Esophagus squamous epithelium (tissue), 5 donors: ENCODE measurements at regions of chr3 and their contacts with region 1.

Region 1: GRCh38 chr3:38651154-38651789 is 1.8 kb upstream of the SCN5A start:
- DNase-seq: no peak
- H3K4me3 ChIP-seq: peak overlapping the region in 1 of 4 donors; percentile 29
- H3K27ac ChIP-seq: no peak overlapping the region
- H3K4me1 ChIP-seq: peaks cover 10 to 25% (median 11%) of the 10 kb centered on the region in 3 donors
- H3K27me3 ChIP-seq: peaks cover 0 to 96% (median 6%) of the 10 kb centered on the region in 4 donors
- CTCF ChIP-seq: peak; percentile 75 to 96 (median 87)
- POLR2A ChIP-seq: no peak

Region 2: GRCh38 chr3:38397320-38397719 is 254.0 kb before region 1 on chr3:
- intact Hi-C with region 1: no loop called
- DNase-seq: no peak
- H3K4me3 ChIP-seq: no peak overlapping the region
- H3K27ac ChIP-seq: no peak overlapping the region
- H3K4me1 ChIP-seq: no peaks in the 10 kb centered on the region
- H3K27me3 ChIP-seq: no peaks in the 10 kb centered on the region
- CTCF ChIP-seq: no peak
- POLR2A ChIP-seq: no peak

Region 3: DNA sequence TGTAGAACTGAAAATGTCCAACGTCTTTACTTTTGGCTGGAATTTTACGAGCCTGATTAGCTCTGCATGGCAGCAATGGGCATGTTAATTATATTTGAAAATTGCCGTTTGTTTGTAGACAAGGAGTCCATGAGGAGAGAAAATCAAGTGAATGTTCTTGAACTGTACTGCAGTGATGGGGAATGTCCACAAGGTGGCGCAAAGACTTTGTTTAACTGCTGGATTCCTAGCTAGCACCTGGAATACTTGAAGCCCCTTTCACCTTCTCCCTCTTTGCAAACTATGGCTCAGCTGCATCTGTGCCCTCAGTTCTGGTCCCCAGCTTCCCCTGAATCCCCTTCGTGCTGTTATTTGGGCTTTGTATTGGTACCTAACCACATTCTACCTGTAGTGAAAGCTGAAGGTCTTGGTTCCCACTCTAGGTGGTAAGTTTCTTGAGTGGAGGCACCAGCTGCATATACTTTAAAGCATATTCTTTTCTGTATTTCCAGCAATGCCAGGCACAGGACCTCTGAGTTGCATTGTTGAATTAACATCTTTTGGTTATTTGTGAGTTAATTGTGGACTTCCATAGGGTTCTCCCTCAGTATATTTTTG is 129.8 kb before region 1 on chr3:
- intact Hi-C with region 1: loop called (anchors 5 kb)
- DNase-seq: no peak
- H3K4me3 ChIP-seq: no peak overlapping the region
- H3K27ac ChIP-seq: no peak overlapping the region
- H3K4me1 ChIP-seq: no peaks in the 10 kb centered on the region
- H3K27me3 ChIP-seq: no peaks in the 10 kb centered on the region
- CTCF ChIP-seq: peak; percentile 73 to 94 (median 83)
- POLR2A ChIP-seq: no peak

Region 4: DNA sequence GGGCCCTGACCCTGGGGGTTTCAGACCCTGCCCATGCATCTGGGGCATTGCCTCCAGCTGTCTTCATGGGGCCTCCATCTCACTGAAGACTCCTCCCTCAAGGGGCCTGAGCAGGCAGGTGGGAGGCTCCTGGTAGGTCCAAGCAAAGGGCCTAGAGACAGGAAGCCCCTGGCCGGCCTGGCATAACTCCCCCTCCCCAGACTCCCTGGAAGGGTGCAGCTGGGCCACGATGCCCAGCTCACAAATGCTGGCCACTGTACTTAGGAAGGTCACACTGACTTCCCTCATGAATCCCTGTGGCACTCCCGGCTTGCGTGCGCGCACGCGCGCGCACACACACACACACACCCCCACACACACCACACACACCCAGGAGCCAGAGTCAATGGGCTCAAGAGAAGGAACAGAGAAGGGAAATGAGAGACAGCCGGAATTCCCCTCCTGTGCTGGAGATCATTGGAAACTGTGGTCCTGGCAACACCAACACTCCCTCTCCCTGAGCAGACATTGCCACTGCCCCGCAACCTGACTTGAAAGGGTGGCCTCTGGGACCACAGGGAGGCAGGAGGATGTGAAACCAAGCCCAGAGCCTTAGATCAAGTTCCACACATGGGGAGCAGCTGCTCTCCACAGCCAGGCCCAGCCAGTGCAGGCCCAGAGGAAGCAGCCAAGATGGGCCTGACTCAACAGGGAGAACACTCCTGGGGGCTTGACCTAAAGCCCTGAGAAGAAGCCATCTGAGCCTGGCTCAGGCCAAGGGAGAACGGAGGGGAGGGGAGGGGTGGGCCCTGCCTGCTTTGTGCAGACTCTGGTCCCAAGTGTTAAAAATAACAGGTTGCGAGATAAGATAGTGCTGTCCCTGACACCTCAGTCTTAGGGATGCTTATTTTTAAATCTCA is 71.5 kb before region 1 on chr3:
- intact Hi-C with region 1: no loop called
- DNase-seq: no peak
- H3K4me3 ChIP-seq: no peak overlapping the region
- H3K27ac ChIP-seq: no peak overlapping the region
- H3K4me1 ChIP-seq: no peaks in the 10 kb centered on the region
- H3K27me3 ChIP-seq: no peaks in the 10 kb centered on the region
- CTCF ChIP-seq: no peak
- POLR2A ChIP-seq: no peak

Region 5: GRCh38 chr3:38684546-38684945 is 33.3 kb after region 1 on chr3:
- intact Hi-C with region 1: no loop called
- DNase-seq: no peak
- H3K4me3 ChIP-seq: no peak overlapping the region
- H3K27ac ChIP-seq: no peak overlapping the region
- H3K4me1 ChIP-seq: no peaks in the 10 kb centered on the region
- H3K27me3 ChIP-seq: no peaks in the 10 kb centered on the region
- CTCF ChIP-seq: no peak
- POLR2A ChIP-seq: no peak

Region 6: DNA sequence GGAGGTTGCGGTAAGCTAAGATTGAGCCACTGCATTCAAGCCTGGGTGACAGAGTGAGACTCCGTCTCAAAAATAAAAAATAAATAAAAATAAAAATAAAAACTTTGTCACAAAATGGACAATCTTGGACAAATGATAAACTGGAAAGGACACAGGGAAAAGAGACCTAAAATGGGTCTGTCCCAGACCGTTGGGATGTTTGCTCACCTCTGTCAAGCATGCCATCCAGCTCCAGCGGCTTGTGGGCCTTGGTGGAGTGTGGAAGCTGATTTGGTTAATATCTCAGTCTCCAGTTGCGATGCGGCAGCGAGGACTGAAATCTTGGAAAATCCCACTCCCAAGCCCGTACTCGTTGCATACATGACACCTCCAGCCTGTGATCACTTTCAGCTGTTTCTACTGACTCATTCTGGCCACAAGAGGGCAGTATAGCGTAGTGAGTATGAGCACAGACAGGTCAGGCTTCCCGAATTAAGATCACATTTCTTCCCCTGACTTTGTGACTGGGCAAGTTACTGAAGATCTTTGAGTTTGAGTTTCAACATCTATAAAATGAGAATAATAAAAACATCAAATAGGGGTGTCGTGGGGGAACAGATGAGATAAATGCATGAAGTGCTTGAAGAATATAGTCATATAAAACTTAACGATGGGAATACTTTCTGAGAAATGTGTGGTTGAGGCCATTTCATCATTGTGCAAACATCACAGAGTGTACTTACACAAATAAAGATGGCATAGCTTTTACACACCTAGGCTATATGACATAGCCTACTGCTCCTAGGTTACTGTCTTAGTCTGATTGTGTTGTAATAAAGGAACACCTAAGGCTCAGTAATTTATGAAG is 796.6 kb after region 1 on chr3:
- intact Hi-C with region 1: no loop called
- DNase-seq: peak; percentile 4
- H3K4me3 ChIP-seq: no peak overlapping the region
- H3K27ac ChIP-seq: no peak overlapping the region
- H3K4me1 ChIP-seq: no peaks in the 10 kb centered on the region
- H3K27me3 ChIP-seq: peaks cover 0 to 4% (median 0%) of the 10 kb centered on the region in 4 donors
- CTCF ChIP-seq: peak; percentile 69 to 86 (median 76)
- POLR2A ChIP-seq: no peak